ENCODE measurements at regions of chr17 and their contacts with region 1.

Region 1: DNA sequence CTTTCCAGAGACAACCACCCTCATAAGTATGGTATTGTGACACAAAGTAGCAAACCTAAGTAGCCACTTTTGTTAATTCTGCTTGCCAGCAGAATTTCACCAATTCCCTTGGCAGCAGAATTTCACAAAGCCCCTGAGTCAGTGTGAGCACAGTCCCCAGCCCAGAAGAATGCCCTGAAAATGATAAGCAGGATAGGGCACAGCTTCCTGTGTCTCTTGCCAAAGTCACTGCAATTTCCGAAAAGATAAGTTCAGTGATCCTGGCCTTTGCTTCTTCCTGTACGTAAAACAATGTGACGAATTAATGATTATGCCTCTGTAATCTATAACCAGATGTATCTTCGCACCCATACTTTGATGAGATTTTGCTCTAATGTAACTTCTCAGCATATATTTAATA is 16.0 kb upstream of the WIPF2 start:
- DNase-seq: no peak
- H3K4me3 Mint-ChIP-seq: no peak overlapping the region
- H3K27ac Mint-ChIP-seq: no peak overlapping the region
- H3K4me1 Mint-ChIP-seq: peaks cover 6% of the 10 kb centered on the region
- H3K27me3 Mint-ChIP-seq: peaks cover 14% of the 10 kb centered on the region

Region 2: DNA sequence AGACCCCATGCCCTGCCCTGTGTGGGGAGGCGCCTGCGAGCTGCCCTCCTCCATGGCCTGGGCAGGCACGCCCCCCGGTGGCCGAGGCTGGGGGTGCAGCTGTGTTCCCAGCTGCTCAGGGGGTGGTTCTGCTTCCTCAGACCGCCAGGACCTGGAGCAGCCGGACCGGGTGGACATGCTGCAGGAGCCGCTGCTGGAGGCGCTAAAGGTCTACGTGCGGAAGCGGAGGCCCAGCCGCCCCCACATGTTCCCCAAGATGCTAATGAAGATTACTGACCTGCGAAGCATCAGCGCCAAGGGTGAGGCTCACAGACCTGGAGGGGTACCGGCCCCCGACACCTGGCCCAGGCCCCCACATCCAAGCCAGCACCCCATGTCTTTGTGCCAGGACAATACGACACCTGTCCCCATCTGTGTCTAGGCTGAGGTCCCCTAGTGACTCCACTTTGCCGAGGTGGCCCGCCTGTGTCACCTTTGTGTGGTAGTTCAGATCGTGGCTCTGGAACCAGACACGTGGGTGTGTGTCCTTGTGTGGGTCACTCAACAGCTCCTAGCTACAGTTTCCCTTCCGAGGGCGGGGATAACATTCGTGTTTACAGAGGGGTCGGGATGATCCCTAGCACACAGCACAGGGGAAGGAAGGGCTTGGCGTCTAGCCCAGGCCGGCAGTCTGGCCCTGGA is 152.1 kb after region 1 on chr17:
- intact Hi-C with region 1: loop called (anchors 2 kb)
- DNase-seq: peak; percentile 94
- H3K4me3 Mint-ChIP-seq: no peak overlapping the region
- H3K27ac Mint-ChIP-seq: no peak overlapping the region
- H3K4me1 Mint-ChIP-seq: peaks cover 17% of the 10 kb centered on the region
- H3K27me3 Mint-ChIP-seq: no peaks in the 10 kb centered on the region